Dorsolateral prefrontal cortex (tissue), 120 donors: ENCODE measurements at regions of chr16 and their contacts with region 1.

Region 1: GRCh38 chr16:28974437-28975157 is at the start of gene SPNS1:
- DNase-seq: peak; percentile 95 to 99 (median 98)
- H3K4me3 ChIP-seq: peak within 1 kb of the TSS; percentile 65 to 100 (median 94)
- H3K27ac ChIP-seq: peak within 1 kb of the TSS; percentile 39 to 96 (median 89)
- H3K27me3 ChIP-seq: no peaks in the 10 kb centered on the region
- CTCF ChIP-seq: peak in 32 of 56 donors; percentile 6 to 53 (median 26)
- total RNA-seq, gene SPNS1: 13.6 to 33.8 (median 21.2) TPM

Region 2: DNA sequence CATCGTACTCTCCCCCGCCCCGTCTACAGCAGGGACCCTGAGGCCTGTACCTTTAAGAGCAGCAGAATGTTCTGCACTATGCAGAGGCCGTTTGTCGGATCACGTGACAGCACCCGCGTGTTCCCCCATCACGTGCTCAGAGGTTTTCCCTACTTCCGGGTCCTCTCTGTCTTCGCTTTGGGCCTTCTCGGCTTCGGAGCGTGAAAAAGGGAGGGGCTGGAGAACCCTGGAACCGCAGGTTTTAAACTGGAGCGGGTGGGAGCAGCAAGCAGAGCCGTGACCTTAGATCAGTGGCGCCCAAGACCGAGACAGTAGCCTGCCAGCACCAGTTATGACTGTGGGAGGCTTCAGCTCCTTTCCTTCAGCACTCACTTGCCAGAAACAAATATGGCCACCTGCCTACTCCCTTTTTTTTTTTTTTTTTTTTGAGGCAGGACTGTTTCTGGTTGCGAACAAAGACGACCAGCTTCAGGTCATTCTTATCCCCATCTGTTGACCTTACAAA is 482.6 kb before region 1 on chr16 and contains the start of gene CLN3:
- intact Hi-C with region 1: loop called in 1 of 2 experiments (anchors 10 kb)
- DNase-seq: peak; percentile 92 to 97 (median 96)
- H3K4me3 ChIP-seq: peak within 1 kb of the TSS; percentile 66 to 100 (median 97)
- H3K27ac ChIP-seq: peak within 1 kb of the TSS; percentile 90 to 100 (median 98)
- H3K27me3 ChIP-seq: no peaks in the 10 kb centered on the region
- CTCF ChIP-seq: peak in 14 of 56 donors; percentile 10 to 41 (median 20)
- total RNA-seq, gene CLN3: 9.4 to 41.5 (median 22.9) TPM

Region 3: DNA sequence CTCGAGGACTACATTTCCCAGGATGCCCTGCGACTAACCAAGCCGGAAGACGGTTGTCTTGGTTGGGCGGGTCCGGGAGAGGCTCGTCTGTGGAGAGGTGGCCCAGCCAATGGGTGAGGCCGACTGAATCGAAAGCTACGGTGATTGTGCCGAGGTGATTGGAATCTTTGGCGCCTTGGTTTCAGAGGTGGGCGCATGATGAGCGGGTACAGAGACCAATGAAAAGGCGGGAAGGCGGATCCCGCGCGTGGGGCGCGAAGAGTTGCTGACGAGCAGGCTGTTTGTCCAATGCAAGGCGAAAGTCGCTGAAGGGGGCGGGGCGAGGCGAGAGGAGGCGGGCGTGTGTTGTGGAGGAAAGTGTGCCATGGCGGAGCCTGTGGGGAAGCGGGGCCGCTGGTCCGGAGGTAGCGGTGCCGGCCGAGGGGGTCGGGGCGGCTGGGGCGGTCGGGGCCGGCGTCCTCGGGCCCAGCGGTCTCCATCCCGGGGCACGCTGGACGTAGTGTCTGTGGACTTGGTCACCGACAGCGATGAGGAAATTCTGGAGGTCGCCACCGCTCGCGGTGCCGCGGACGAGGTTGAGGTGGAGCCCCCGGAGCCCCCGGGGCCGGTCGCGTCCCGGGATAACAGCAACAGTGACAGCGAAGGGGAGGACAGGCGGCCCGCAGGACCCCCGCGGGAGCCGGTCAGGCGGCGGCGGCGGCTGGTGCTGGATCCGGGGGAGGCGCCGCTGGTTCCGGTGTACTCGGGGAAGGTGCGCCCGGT is 23.8 kb before region 1 on chr16 and contains the start of gene NFATC2IP:
- intact Hi-C with region 1: loop called (anchors 1 to 2 kb)
- DNase-seq: peak; percentile 100
- H3K4me3 ChIP-seq: peak within 1 kb of the TSS; percentile 70 to 100 (median 96)
- H3K27ac ChIP-seq: peak within 1 kb of the TSS; percentile 1 to 93 (median 81)
- H3K27me3 ChIP-seq: no peaks in the 10 kb centered on the region
- CTCF ChIP-seq: peak in 17 of 56 donors; percentile 5 to 53 (median 22)
- total RNA-seq, gene NFATC2IP: 23.5 to 52.5 (median 35.3) TPM

Region 4: GRCh38 chr16:29192325-29193247 is 218.0 kb after region 1 on chr16:
- intact Hi-C with region 1: no loop called
- DNase-seq: peak in 4 of 10 donors; percentile 24 to 41 (median 26)
- H3K4me3 ChIP-seq: no peak overlapping the region
- H3K27ac ChIP-seq: no peak overlapping the region
- H3K27me3 ChIP-seq: no peaks in the 10 kb centered on the region
- CTCF ChIP-seq: no peak

Region 5: GRCh38 chr16:29790183-29790952 is 815.8 kb after region 1 on chr16 and contains the start of gene KIF22:
- intact Hi-C with region 1: loop called in 1 of 2 experiments (anchors 10 kb)
- DNase-seq: peak; percentile 98 to 100 (median 99)
- H3K4me3 ChIP-seq: peak within 1 kb of the TSS; percentile 66 to 100 (median 94)
- H3K27ac ChIP-seq: peak within 1 kb of the TSS; percentile 63 to 99 (median 93)
- H3K27me3 ChIP-seq: no peaks in the 10 kb centered on the region
- CTCF ChIP-seq: peak; percentile 49 to 89 (median 80)
- total RNA-seq, gene KIF22: 10.5 to 31.6 (median 21.6) TPM